Ovary (tissue), 10 donors: ENCODE measurements at regions of chr20 and their contacts with region 1.

Region 1: DNA sequence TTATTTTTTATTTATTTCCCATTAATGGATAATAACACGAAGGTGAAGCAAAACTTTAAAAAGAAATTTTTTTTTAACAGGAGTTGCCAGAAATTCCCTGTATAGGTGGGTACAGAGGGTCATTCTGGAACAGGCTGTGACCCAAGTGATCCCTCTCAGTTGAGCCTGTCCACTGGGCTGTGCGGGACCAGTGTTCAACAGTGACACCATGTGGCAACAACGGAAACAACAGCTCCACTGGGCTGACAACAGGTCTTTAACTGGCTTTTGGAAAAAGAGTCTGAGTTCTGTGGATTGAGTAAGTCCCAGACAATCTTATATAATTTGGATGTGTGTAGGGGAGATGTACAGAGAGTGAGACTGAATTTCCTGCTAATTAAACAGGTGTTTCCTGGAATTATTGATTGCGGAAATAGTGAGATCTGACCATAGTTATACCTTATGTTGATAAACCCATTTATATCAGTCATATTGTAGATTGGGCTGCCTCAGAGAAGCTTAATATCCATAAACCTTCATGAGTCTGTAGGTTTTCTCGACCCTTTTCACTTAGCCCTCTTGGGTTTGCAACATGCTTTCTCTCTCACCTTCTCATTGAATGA is 17.6 kb downstream of the KIAA1755 start:
- DNase-seq: no peak
- H3K4me3 ChIP-seq: no peak overlapping the region
- H3K27ac ChIP-seq: no peak overlapping the region
- H3K4me1 ChIP-seq: peaks cover 8% of the 10 kb centered on the region
- H3K27me3 ChIP-seq: no peaks in the 10 kb centered on the region
- CTCF ChIP-seq: no peak
- EP300 ChIP-seq: no peak
- POLR2A ChIP-seq: no peak

Region 2: DNA sequence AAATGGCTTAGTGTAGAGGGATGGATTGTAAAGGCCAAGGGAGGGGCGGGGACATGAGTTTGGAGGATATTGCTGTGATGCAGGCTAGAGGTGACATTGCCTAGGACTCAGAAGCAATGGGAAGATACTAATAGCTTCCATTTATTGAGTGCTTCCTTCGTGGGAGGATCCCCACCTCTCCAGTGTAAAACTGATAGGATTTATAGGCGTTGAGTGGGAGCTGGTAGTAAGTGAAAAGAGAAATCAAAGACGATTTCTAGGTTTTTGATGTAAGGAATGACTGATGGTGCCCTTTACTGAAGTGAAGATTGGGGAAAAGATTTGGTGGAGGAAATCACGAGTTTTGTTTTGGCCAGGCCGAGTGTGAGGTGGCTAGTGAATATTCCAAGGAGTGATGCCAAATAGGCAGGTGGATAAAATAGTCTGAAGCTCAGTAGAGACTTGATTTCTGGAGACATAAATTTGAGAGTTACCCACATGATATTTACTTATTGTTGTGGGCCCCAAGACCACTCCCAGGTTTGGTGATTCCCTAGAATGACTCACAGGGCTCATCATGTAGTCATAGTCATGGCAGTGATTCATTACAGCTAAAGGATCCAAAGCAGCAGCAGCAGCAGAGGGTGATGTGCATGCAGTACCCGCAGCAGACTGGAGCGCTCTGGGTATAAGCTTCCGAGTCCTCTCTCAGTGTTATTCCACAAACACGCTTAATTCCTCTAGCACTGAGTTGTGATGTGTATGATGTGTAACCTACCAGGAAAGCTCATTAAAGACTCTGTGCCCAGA is 199.2 kb before region 1 on chr20:
- intact Hi-C with region 1: no loop called
- DNase-seq: no peak
- H3K4me3 ChIP-seq: no peak overlapping the region
- H3K27ac ChIP-seq: no peak overlapping the region
- H3K4me1 ChIP-seq: no peaks in the 10 kb centered on the region
- H3K27me3 ChIP-seq: no peaks in the 10 kb centered on the region
- CTCF ChIP-seq: no peak
- EP300 ChIP-seq: no peak
- POLR2A ChIP-seq: no peak

Region 3: GRCh38 chr20:38165089-38165989 is 77.6 kb before region 1 on chr20 and contains the start of gene TGM2:
- intact Hi-C with region 1: no loop called
- DNase-seq: peak; percentile 70 to 84 (median 71)
- H3K4me3 ChIP-seq: peak within 1 kb of the TSS; percentile 40
- H3K27ac ChIP-seq: peak within 1 kb of the TSS in 1 of 2 donors; percentile 22
- H3K4me1 ChIP-seq: peaks cover 13% of the 10 kb centered on the region
- H3K27me3 ChIP-seq: no peaks in the 10 kb centered on the region
- CTCF ChIP-seq: peak; percentile 83 to 84 (median 83)
- EP300 ChIP-seq: no peak
- POLR2A ChIP-seq: no peak
- total RNA-seq, gene TGM2: 15.0 to 320 (median 52.8) TPM

Region 4: DNA sequence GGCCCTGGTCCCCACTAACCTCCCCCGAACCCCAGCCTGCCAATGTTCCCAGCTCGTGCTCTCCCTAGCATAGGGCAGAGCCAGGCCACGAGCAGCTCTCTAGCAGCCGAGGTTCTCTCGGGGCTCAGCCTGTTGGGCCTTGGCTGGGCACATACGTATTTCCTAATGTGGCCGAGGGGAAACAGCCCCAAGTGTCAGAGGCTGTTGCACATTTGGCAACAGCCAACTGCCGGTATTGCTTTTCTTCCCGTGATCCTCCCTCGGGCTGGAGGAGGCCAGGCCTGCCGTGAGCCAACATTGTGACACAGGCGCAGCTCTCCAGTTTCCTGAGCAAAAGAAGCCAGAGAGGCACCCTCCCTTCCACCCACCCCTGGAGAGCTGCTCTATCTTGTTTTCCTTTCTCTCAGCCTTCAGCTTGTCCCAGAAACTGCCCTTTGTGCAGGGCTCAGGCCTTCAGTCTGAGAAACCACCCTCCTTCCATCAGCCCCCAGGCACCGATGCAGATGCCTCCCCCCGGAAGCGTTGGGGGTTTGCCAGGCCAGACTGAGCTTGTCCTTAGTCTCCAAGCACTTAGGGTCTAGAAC is 55.8 kb after region 1 on chr20:
- intact Hi-C with region 1: loop called in 2 of 4 experiments (anchors 5 to 10 kb)
- DNase-seq: peak; percentile 91 to 95 (median 93)
- H3K4me3 ChIP-seq: no peak overlapping the region
- H3K27ac ChIP-seq: peak overlapping the region; percentile 56 to 97
- H3K4me1 ChIP-seq: peaks cover 8% of the 10 kb centered on the region
- H3K27me3 ChIP-seq: no peaks in the 10 kb centered on the region
- CTCF ChIP-seq: peak in 1 of 3 donors; percentile 19
- EP300 ChIP-seq: peak; percentile 8
- POLR2A ChIP-seq: no peak

Region 5: GRCh38 chr20:38304845-38305447 is 62.0 kb after region 1 on chr20:
- intact Hi-C with region 1: loop called in 1 of 4 experiments (anchors 10 kb)
- DNase-seq: peak in 1 of 5 donors; percentile 49
- H3K4me3 ChIP-seq: no peak overlapping the region
- H3K27ac ChIP-seq: no peak overlapping the region
- H3K4me1 ChIP-seq: peaks cover under 1% of the 10 kb centered on the region
- H3K27me3 ChIP-seq: no peaks in the 10 kb centered on the region
- CTCF ChIP-seq: no peak
- EP300 ChIP-seq: no peak
- POLR2A ChIP-seq: no peak